ENCODE measurements at regions of chr7 and their contacts with region 1.

Region 1: GRCh38 chr7:132443776-132444520 is 132.3 kb downstream of the PLXNA4 start:
- DNase-seq: no peak
- ATAC-seq: no peak
- H3K4me3 Mint-ChIP-seq: no peak overlapping the region
- H3K27ac Mint-ChIP-seq: no peak overlapping the region
- H3K4me1 Mint-ChIP-seq: peaks cover 49% of the 10 kb centered on the region
- H3K27me3 Mint-ChIP-seq: peaks cover 24% of the 10 kb centered on the region

Region 2: GRCh38 chr7:132328047-132328620 is 115.8 kb before region 1 on chr7:
- CTCF ChIA-PET with region 1: no interaction called
- DNase-seq: no peak
- ATAC-seq: no peak
- H3K4me3 Mint-ChIP-seq: no peak overlapping the region
- H3K27ac Mint-ChIP-seq: no peak overlapping the region
- H3K4me1 Mint-ChIP-seq: no peaks in the 10 kb centered on the region
- H3K27me3 Mint-ChIP-seq: peaks cover 40% of the 10 kb centered on the region

Region 3: GRCh38 chr7:132419542-132419941 is 24.4 kb before region 1 on chr7:
- CTCF ChIA-PET with region 1: no interaction called
- DNase-seq: no peak
- ATAC-seq: no peak
- H3K4me3 Mint-ChIP-seq: no peak overlapping the region
- H3K27ac Mint-ChIP-seq: no peak overlapping the region
- H3K4me1 Mint-ChIP-seq: no peaks in the 10 kb centered on the region
- H3K27me3 Mint-ChIP-seq: peaks cover 45% of the 10 kb centered on the region

Region 4: DNA sequence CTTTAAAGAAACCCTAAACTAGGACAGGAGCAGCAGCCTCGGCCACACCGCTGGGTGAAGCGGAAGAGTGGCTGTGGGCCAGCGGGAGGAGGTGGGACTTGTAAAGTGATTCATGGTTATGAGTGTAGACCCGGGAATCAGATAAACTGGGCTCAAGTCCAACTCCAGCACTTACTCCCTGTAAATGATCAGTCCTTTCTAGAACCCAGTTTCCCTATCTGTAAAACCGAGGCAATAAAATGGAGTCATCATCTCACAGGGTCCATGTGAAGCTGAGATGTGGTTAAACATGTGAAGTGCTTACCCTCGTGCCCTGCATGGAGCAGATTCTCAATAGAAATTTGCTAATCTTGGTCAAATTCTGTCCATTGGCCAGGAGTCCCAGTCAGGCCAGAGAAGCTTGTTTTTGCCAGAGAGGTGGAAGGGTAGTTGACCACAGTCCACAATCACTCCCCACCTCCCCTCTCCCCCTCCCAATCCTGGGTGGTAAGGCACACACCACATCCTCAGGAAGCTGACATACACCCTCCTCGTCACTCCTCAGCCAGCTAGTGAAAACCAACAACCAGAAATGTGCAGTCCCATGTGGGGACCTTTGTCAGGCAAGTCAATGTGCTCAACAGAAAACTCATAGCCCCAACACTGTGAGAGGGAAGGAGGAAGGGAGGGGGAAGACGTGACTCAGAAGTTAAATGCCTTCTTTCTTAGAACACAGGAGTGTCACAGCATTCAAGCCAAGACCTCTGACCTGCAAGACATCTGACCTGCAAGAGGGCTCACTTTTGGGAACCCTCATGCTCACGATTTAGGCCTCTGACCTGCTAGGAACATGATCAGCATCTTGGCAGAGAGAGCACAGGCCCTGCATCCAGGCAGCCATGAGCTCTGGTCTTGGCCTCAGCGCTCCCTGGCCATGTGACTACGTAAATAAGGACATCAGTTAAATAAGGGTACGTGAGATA is 12.8 kb before region 1 on chr7:
- CTCF ChIA-PET with region 1: interaction called, 10 read pairs
- DNase-seq: peak; percentile 92
- ATAC-seq: peak; percentile 90
- H3K4me3 Mint-ChIP-seq: peak overlapping the region; percentile 14
- H3K27ac Mint-ChIP-seq: peak overlapping the region; percentile 84
- H3K4me1 Mint-ChIP-seq: peaks cover 77% of the 10 kb centered on the region
- H3K27me3 Mint-ChIP-seq: no peaks in the 10 kb centered on the region

Region 5: GRCh38 chr7:132508827-132509301 is 64.9 kb after region 1 on chr7:
- CTCF ChIA-PET with region 1: no interaction called
- DNase-seq: no peak
- ATAC-seq: no peak
- H3K4me3 Mint-ChIP-seq: no peak overlapping the region
- H3K27ac Mint-ChIP-seq: no peak overlapping the region
- H3K4me1 Mint-ChIP-seq: peaks cover 30% of the 10 kb centered on the region
- H3K27me3 Mint-ChIP-seq: peaks cover 5% of the 10 kb centered on the region

Region 6: DNA sequence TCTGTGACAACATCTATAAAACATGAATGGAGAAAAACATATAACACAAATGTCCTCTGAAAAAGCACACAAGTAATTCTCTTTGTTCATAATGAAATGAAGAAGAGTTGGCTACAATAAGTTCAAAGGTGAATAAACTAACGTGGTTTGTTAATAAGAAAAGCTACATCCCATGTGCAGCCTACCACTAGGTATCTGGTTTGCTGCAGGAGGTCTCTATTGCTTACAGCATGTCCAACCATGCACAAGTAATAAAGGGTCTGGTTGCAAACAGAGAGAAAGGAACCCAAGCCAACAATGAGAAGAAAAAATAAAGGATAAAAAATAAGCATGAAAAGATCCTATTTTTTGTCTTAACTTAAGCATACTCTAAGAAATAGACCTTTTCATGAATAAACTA is 498.8 kb after region 1 on chr7:
- CTCF ChIA-PET with region 1: no interaction called
- DNase-seq: no peak
- ATAC-seq: no peak
- H3K4me3 Mint-ChIP-seq: no peak overlapping the region
- H3K27ac Mint-ChIP-seq: no peak overlapping the region
- H3K4me1 Mint-ChIP-seq: peaks cover 5% of the 10 kb centered on the region
- H3K27me3 Mint-ChIP-seq: no peaks in the 10 kb centered on the region

Measured in activated CD8-positive, alpha-beta memory T cell treated with anti-CD3 and anti-CD28 coated beads, Interleukin-2, amount 10 ng/mL, durations not matched to agents 7 days and 5 days (primary cell).